Endothelial cell of umbilical vein (primary cell): ENCODE measurements at regions of chr5 and their contacts with region 1.

Region 1: DNA sequence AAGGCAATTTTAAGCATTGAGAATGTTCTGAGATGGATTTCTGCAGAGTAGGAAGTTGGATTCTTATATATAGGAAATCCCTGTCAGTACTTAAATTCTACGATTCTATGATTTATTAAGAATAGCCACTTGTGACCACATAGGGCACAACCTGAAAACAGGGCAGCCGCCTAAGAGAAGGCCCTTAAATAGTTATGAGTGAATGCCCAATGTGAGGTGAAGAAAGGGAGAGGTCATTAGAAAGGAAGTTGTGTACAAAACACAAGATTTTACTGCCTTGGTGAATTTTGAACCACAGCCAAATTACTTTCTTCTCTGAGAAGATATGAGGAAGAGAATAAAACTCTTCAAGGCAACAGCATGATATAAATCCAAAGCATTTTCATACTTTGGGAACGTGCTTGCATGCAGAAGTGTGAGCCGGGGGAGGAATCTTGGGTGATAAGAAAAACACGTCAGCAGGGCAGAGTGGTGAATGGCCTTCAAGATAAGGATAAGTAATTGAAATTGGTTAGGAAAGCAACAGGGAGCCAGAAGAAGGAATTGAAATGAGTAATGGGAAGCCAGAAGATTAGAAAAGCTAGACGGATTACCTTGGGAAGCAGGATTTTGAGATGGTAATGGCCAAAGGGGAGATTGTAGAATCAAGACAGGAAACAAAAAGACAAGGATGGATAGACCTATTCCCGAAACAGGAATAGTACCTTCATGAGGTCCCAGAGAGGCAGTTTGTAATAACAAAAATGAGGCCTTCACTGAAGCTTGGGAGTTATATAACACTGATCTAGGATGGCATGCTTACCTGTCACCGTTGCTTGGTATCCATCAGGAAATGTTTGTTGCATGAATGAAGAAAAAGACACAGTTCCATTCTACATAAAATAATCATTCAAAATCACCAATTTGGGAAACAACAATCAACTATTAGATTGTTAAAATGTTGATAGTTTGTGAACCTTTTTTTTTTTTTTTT is 244.3 kb downstream of the PDE4D start:
- DNase-seq: peak; percentile 91
- H3K4me3 ChIP-seq: peak overlapping the region in 1 of 3 experiments; percentile 14
- H3K27ac ChIP-seq: peak overlapping the region; percentile 79
- H3K4me1 ChIP-seq: peaks cover 24% of the 10 kb centered on the region
- H3K27me3 ChIP-seq: no peaks in the 10 kb centered on the region
- CTCF ChIP-seq: no peak
- POLR2A ChIP-seq: no peak

Region 2: GRCh38 chr5:59525959-59526358 is 123.3 kb before region 1 on chr5:
- CTCF ChIA-PET with region 1: no interaction called
- POLR2A ChIA-PET with region 1: no interaction called
- dilution Hi-C with region 1: no loop called
- intact Hi-C with region 1: loop called (anchors 1 kb)
- DNase-seq: peak; percentile 63
- H3K4me3 ChIP-seq: no peak overlapping the region
- H3K27ac ChIP-seq: peak overlapping the region; percentile 88
- H3K4me1 ChIP-seq: peaks cover 33% of the 10 kb centered on the region
- H3K27me3 ChIP-seq: no peaks in the 10 kb centered on the region
- CTCF ChIP-seq: peak in 1 of 2 donors; percentile 7
- POLR2A ChIP-seq: no peak

Region 3: GRCh38 chr5:59598547-59598874 is 50.7 kb before region 1 on chr5:
- CTCF ChIA-PET with region 1: interaction called, 4 read pairs
- POLR2A ChIA-PET with region 1: no interaction called
- dilution Hi-C with region 1: no loop called
- intact Hi-C with region 1: loop called (anchors 5 kb)
- DNase-seq: peak; percentile 21
- H3K4me3 ChIP-seq: peak overlapping the region in 2 of 3 experiments; percentile 2 to 34
- H3K27ac ChIP-seq: peak overlapping the region; percentile 19
- H3K4me1 ChIP-seq: peaks cover 24% of the 10 kb centered on the region
- H3K27me3 ChIP-seq: no peaks in the 10 kb centered on the region
- CTCF ChIP-seq: no peak
- POLR2A ChIP-seq: no peak

Region 4: GRCh38 chr5:60522292-60522905 is 873.2 kb after region 1 on chr5:
- CTCF ChIA-PET with region 1: no interaction called
- POLR2A ChIA-PET with region 1: no interaction called
- dilution Hi-C with region 1: no loop called
- intact Hi-C with region 1: no loop called
- DNase-seq: peak; percentile 17
- H3K4me3 ChIP-seq: no peak overlapping the region
- H3K27ac ChIP-seq: no peak overlapping the region
- H3K4me1 ChIP-seq: no peaks in the 10 kb centered on the region
- H3K27me3 ChIP-seq: no peaks in the 10 kb centered on the region
- CTCF ChIP-seq: no peak
- POLR2A ChIP-seq: no peak